ENCODE measurements at regions of chrX and their contacts with region 1.

Region 1: DNA sequence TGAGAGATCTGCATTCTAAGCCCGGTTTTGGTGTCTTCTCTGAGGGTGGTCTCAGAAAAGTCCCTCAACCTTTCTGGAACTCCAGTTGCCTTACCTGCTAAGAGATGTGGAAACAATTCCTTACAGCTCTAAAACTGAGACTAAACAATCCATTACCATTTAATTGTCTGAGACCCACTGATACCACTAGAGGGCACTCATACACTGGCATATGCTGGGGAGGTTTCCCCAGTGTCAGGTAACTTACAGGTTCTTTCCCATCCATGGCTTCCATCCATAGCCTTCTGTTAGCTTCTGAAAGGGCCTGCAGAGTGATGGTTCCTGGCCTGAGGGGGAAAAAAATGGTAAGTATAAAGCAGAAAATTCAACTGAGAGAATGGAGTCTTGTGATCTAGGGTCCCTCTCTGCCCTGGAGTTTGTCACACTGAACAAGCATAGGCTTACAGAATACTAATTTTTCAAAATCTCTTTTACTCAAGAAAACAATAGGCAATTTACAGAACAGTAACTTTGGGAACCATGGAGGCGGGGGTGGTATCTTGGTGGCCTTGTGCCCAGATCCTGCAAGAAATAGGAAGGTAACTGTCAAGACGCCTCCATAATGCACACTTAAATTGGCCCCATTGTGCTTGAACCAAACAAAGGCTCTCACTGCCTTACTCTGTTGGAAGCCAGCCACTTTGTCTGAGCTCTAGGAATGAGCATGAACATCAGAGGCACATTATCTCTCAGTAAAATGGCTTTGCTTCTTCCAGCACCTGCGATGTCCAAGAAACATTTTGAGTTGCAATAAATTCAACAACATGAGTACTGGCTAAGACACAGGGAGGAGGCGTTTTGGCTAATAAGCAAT is 236.1 kb downstream of the OPHN1 start:
- DNase-seq: no peak
- ATAC-seq: no peak

Region 2: GRCh38 chrX:68060506-68061205 is 136.5 kb before region 1 on chrX:
- intact Hi-C with region 1: no loop called
- DNase-seq: no peak
- ATAC-seq: no peak

Region 3: DNA sequence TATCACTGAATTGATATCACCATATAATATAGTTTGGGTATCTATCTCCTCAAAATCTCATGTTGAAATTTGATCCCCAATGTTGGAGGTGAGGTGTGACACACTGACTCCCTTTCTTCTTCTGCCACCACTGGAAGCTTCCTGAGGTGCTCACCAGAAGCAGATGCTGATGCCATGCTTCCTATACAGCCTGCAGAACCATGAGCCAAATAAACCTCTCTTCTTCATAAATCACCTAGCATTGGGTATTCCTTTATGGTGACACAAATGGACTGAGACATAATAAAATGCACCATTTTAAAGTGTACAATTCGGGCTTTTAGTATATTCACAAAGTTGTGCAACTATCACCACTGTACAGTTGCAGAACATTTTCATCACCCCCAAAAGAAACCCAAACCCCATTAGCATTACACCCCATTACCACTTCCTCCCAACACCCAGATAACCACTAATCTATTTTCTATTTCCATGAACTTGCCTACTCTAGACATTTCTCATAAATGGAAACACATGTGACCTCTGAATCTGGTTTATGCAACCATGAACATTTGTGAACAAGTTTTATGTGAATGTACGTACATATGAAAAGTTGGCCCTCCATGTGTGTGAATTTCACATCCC is 87.2 kb after region 1 on chrX:
- intact Hi-C with region 1: no loop called
- DNase-seq: no peak
- ATAC-seq: no peak

Region 4: DNA sequence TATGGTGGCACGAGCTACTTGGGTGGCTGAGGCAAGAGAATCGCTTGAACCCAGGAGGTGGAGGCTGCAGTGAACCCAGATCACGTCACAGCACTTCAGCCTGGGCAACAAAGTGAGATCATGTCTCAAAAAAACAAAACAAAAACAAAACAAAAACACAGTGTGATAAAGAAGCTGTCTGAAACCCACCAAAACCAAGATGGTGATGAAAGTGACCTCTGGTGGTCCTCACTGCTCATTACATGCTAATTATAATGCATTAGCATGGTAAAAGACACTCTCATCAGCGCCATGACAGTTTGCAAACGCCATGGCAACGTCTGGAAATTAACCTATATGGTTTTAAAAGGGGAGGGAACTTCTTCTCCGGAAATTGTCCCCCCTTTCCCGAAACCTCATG is 265.5 kb after region 1 on chrX:
- intact Hi-C with region 1: loop called (anchors 2 kb)
- DNase-seq: no peak
- ATAC-seq: no peak

Region 5: GRCh38 chrX:68498508-68499379 is 301.6 kb after region 1 on chrX and contains the start of gene YIPF6:
- intact Hi-C with region 1: loop called (anchors 10 kb)
- DNase-seq: peak; percentile 91
- ATAC-seq: peak; percentile 96
- total RNA-seq, gene YIPF6: 31.9 TPM

Region 6: GRCh38 chrX:68710870-68711576 is 513.9 kb after region 1 on chrX:
- intact Hi-C with region 1: loop called (anchors 10 kb)
- DNase-seq: no peak
- ATAC-seq: peak; percentile 79

Measured in Right ventricle myocardium inferior (tissue), 1 donor.